ENCODE measurements at regions of chr11 and their contacts with region 1.

Region 1: GRCh38 chr11:67439321-67439883 is 1.9 kb upstream of the PTPRCAP start:
- DNase-seq: no peak
- H3K4me3 ChIP-seq: no peak overlapping the region
- H3K27ac ChIP-seq: no peak overlapping the region
- H3K4me1 ChIP-seq: peaks cover 0 to 24% (median 16%) of the 10 kb centered on the region in 4 experiments; a peak in 6 of 7 replicates
- H3K27me3 ChIP-seq: no peaks in the 10 kb centered on the region
- CTCF ChIP-seq: peak in 2 of 3 experiments; percentile 53 to 60; a peak in 3 of 4 replicates
- EP300 ChIP-seq: no peak
- POLR2A ChIP-seq: no peak
- RAD21 ChIP-seq: peak; percentile 31 to 46; a peak in 3 of 4 replicates

Region 2: DNA sequence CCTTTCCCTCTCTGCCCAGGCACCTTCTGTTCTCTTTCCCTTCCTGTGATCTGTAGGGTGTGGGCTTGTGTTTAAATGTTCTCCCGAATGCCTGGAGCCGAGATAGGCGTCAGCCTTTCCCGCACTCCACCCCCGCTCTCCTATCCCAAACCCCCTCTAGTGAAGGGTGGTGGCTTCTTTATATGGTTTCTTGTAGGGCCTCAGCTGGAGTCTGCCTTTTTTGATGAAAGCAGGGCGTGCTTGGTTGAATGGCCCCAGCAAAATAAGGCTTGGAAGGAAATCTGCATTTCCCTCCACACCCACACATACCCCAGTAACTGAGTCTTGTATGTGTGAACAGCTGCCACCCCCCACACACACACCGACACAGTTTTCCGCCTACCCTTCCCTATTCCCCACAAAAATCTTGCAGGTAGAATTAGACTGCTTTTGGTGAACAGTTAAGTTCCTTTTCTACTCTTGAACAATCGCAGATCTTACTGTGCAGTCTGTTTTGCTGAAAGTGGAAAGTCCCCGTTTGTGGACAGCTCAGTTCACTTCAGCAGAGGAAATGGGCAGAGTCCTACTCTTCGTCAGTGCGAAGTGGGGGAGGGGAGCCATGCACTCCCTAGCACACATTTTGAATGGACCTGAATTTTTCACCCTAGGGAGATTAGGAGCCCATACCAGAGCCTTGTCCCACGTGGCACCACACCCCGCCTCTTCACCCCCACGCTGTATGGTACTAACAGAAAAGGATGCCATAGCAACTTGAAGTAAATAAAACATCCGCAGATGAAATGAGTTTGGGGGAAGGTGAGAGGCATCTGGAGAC is 198.6 kb before region 1 on chr11:
- CTCF ChIA-PET with region 1: no interaction called
- POLR2A ChIA-PET with region 1: no interaction called
- DNase-seq: no peak
- H3K4me3 ChIP-seq: peak overlapping the region; percentile 90 to 99 (median 94)
- H3K27ac ChIP-seq: peak overlapping the region; percentile 83
- H3K4me1 ChIP-seq: peaks cover 6 to 8% (median 7%) of the 10 kb centered on the region in 4 experiments; a peak in 5 of 7 replicates
- H3K27me3 ChIP-seq: no peaks in the 10 kb centered on the region
- CTCF ChIP-seq: no peak
- EP300 ChIP-seq: 0 out of 3 replicates have a peak, but pooled peaks of 1 of the 2 experiments have one; percentile 22
- POLR2A ChIP-seq: peak in 1 of 2 experiments; percentile 48; a peak in 1 of 3 replicates
- RAD21 ChIP-seq: no peak

Region 3: DNA sequence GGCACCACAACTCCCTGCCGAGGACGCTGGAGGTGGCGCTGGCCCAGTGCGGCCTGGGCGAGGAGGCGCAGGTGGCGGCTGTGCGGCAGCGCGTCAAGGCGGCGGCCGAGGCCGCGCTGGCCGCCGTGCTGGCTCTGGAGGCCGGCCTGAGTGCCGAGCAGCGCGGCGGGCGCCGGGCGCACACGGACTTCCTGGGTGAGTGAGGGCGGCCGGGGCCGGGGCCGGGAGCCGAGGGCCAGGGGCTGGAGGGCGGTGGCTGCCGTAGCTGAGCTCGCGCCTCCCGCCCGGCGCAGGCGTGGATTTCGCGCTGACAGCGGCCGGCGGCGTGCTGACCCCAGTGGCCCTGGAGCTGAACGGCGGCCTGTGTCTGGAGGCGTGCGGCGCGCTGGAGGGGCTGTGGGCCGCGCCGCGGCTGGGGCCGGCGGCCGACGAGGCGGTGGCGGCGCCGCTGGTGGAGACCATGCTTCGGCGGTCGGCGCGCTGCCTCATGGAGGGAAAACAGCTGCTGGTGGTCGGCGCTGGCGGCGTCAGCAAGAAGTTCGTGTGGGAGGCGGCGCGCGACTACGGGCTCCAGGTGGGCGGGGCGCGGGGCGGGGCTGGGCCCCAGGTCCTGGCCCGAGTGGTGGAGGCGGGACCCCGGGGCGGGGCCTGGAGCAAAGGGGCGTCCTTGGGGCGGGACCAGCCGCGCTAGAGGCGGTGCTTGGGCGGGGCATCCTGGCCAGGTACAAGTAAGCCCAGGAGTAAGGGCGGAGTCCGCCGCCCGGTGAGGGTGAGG is 18.6 kb before region 1 on chr11:
- CTCF ChIA-PET with region 1: interaction called, 4 read pairs
- POLR2A ChIA-PET with region 1: interaction called, 104 read pairs
- DNase-seq: peak; percentile 84 to 100
- H3K4me3 ChIP-seq: peak overlapping the region; percentile 32 to 64 (median 36); a peak in 7 of 8 replicates
- H3K27ac ChIP-seq: no peak overlapping the region
- H3K4me1 ChIP-seq: peaks cover 4 to 15% (median 10%) of the 10 kb centered on the region in 4 experiments
- H3K27me3 ChIP-seq: peaks cover 0 to 8% (median 5%) of the 10 kb centered on the region in 4 experiments; a peak in 4 of 7 replicates
- CTCF ChIP-seq: no peak
- EP300 ChIP-seq: no peak
- POLR2A ChIP-seq: peak in 1 of 2 experiments; percentile 42; a peak in 1 of 3 replicates
- RAD21 ChIP-seq: no peak

Region 4: GRCh38 chr11:67428052-67428914 is 11.1 kb before region 1 on chr11 and contains the start of gene RPS6KB2:
- CTCF ChIA-PET with region 1: no interaction called
- POLR2A ChIA-PET with region 1: interaction called, 104 read pairs
- DNase-seq: peak; percentile 91 to 100
- H3K4me3 ChIP-seq: peak within 1 kb of the TSS; percentile 66 to 98 (median 90)
- H3K27ac ChIP-seq: peak within 1 kb of the TSS; percentile 33
- H3K4me1 ChIP-seq: peaks cover 0 to 12% (median 4%) of the 10 kb centered on the region in 4 experiments; a peak in 6 of 7 replicates
- H3K27me3 ChIP-seq: no peaks in the 10 kb centered on the region
- CTCF ChIP-seq: no peak
- EP300 ChIP-seq: 0 out of 3 replicates have a peak, but pooled peaks of 1 of the 2 experiments have one; percentile 49
- POLR2A ChIP-seq: peak in 1 of 2 experiments; percentile 91; a peak in 2 of 3 replicates
- RAD21 ChIP-seq: no peak
- total RNA-seq, gene RPS6KB2: 41.0 and 43.9 TPM in 2 replicates

Region 5: DNA sequence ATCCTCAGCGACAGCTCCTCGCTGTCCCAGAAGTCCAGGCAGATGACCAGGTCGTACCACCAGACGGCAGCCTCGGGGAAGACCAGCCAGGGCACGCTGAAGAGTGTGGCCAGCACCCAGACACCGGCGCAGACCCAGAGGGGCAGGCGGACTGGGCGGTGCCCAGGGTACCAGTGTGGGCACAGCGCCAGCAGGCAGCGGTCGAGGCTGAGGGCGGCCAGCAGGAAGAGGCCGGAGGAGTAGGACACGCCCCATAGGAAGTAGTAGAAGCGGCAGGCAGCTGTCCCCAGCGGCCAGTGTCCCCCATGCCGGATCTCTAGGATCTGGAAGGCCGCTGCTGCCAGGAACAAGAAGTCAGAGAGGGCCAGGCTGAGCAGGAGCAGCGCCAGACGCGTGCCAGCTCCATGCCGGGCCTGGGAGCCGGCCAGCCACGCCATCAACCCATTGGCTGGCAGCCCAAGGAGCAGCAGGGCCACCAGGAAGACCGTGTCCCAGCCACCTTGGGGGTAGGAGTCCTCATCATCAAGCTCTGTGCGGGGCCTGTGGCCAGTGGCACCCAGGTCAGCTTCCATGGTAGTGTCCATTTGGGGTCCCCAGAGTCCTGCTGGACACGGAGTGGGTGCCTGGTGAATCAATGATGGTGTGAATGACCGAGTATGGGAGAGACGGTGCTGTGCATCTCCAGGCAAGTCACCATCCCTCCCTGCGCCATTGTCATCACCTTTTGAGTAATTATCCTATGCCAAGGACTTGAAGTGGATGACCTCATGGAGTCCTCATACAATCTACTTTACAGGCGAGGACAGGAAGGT is 12.9 kb after region 1 on chr11 and contains the start of gene GPR152:
- CTCF ChIA-PET with region 1: interaction called, 8 read pairs
- POLR2A ChIA-PET with region 1: interaction called, 27 read pairs
- DNase-seq: no peak
- H3K4me3 ChIP-seq: no peak within 1 kb of the TSS
- H3K27ac ChIP-seq: no peak within 1 kb of the TSS
- H3K4me1 ChIP-seq: no peaks in the 10 kb centered on the region
- H3K27me3 ChIP-seq: no peaks in the 10 kb centered on the region
- CTCF ChIP-seq: no peak
- EP300 ChIP-seq: no peak
- POLR2A ChIP-seq: no peak
- RAD21 ChIP-seq: no peak
- total RNA-seq, gene GPR152: not detected in 2 replicates

Region 6: GRCh38 chr11:67468835-67469811 is 29.7 kb after region 1 on chr11 and contains the start of gene TMEM134:
- CTCF ChIA-PET with region 1: interaction called, 7 read pairs
- POLR2A ChIA-PET with region 1: interaction called, 36 read pairs
- DNase-seq: peak; percentile 70 to 93
- H3K4me3 ChIP-seq: peak within 1 kb of the TSS; percentile 55 to 90 (median 76)
- H3K27ac ChIP-seq: peak within 1 kb of the TSS; percentile 58; the same call in 1 of the 2 replicates
- H3K4me1 ChIP-seq: peaks cover under 1 to 12% (median 3%) of the 10 kb centered on the region in 4 experiments; a peak in 6 of 7 replicates
- H3K27me3 ChIP-seq: no peaks in the 10 kb centered on the region
- CTCF ChIP-seq: peak; percentile 45 to 63 (median 59)
- EP300 ChIP-seq: no peak
- POLR2A ChIP-seq: peak; percentile 57 to 84
- RAD21 ChIP-seq: peak; percentile 57 to 72
- total RNA-seq, gene TMEM134: 32.4 and 33.5 TPM in 2 replicates

Measured in H1 (cell line).